IMR-90 (cell line): ENCODE measurements at regions of chr6 and their contacts with region 1.

Region 1: GRCh38 chr6:105484238-105485161 is 81.6 kb upstream of the PREP start:
- DNase-seq: peak; percentile 55
- ATAC-seq: peak; percentile 80
- H3K4me3 ChIP-seq: no peak overlapping the region
- H3K27ac ChIP-seq: no peak overlapping the region
- H3K4me1 ChIP-seq: peaks cover 15% of the 10 kb centered on the region
- H3K27me3 ChIP-seq: no peaks in the 10 kb centered on the region
- CTCF ChIP-seq: peak; percentile 95
- POLR2A ChIP-seq: peak; percentile 57; the same call in 1 of the 2 replicates
- RAD21 ChIP-seq: peak; percentile 97

Region 2: GRCh38 chr6:105087571-105088211 is 396.8 kb before region 1 on chr6:
- CTCF ChIA-PET with region 1: no interaction called
- POLR2A ChIA-PET with region 1: no interaction called
- dilution Hi-C with region 1: no loop called
- in situ Hi-C with region 1: no loop called
- intact Hi-C with region 1: loop called (anchors 5 kb)
- DNase-seq: peak; percentile 69
- ATAC-seq: peak; percentile 90
- H3K4me3 ChIP-seq: no peak overlapping the region
- H3K27ac ChIP-seq: no peak overlapping the region
- H3K4me1 ChIP-seq: no peaks in the 10 kb centered on the region
- H3K27me3 ChIP-seq: peaks cover 5% of the 10 kb centered on the region
- CTCF ChIP-seq: peak; percentile 91
- POLR2A ChIP-seq: no peak
- RAD21 ChIP-seq: peak; percentile 94

Region 3: GRCh38 chr6:105363100-105363754 is 121.3 kb before region 1 on chr6:
- CTCF ChIA-PET with region 1: no interaction called
- POLR2A ChIA-PET with region 1: no interaction called
- dilution Hi-C with region 1: no loop called
- in situ Hi-C with region 1: no loop called
- intact Hi-C with region 1: no loop called
- DNase-seq: peak; percentile 47
- ATAC-seq: peak; percentile 40
- H3K4me3 ChIP-seq: no peak overlapping the region
- H3K27ac ChIP-seq: no peak overlapping the region
- H3K4me1 ChIP-seq: peaks cover 6% of the 10 kb centered on the region
- H3K27me3 ChIP-seq: no peaks in the 10 kb centered on the region
- CTCF ChIP-seq: peak; percentile 66
- POLR2A ChIP-seq: no peak
- RAD21 ChIP-seq: peak; percentile 72

Region 4: GRCh38 chr6:105474234-105474633 is 10.3 kb before region 1 on chr6:
- CTCF ChIA-PET with region 1: interaction called, 10 read pairs
- POLR2A ChIA-PET with region 1: no interaction called
- dilution Hi-C with region 1: no loop called
- in situ Hi-C with region 1: no loop called
- intact Hi-C with region 1: no loop called
- DNase-seq: no peak
- ATAC-seq: no peak
- H3K4me3 ChIP-seq: no peak overlapping the region
- H3K27ac ChIP-seq: no peak overlapping the region
- H3K4me1 ChIP-seq: no peaks in the 10 kb centered on the region
- H3K27me3 ChIP-seq: peaks cover 8% of the 10 kb centered on the region
- CTCF ChIP-seq: no peak
- POLR2A ChIP-seq: no peak
- RAD21 ChIP-seq: no peak

Region 5: DNA sequence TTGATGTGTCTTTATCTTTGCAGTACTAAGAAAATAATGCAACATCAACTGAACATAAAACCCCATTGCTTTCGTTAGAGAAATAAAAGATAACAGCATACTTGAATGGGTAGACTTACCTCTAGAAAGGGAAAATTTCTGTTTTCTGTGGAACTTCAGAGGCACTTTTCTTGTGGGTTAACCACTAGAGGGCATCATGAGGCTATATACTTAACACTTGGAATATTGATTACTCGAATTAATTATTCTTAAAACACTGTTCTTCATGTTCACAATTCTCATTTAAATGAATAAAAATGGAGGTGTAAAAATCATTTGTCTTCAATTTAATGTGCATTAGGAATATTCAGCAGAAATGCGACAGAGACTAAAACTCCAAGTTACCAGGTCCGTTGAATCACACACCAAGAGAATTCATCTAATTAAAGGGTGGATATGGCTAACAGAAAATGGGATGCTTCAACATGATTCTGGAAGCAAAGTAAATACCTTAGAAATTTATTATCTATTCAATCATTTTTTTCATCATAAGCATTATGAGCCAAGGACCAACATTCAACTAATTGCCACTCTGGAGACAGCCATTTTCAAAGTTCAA is 249.2 kb after region 1 on chr6:
- CTCF ChIA-PET with region 1: no interaction called
- POLR2A ChIA-PET with region 1: no interaction called
- dilution Hi-C with region 1: no loop called
- in situ Hi-C with region 1: no loop called
- intact Hi-C with region 1: loop called (anchors 2 kb)
- DNase-seq: peak; percentile 60
- ATAC-seq: peak; percentile 44; the same call in 1 of the 2 replicates
- H3K4me3 ChIP-seq: no peak overlapping the region
- H3K27ac ChIP-seq: no peak overlapping the region
- H3K4me1 ChIP-seq: no peaks in the 10 kb centered on the region
- H3K27me3 ChIP-seq: no peaks in the 10 kb centered on the region
- CTCF ChIP-seq: peak; percentile 65
- POLR2A ChIP-seq: no peak
- RAD21 ChIP-seq: peak; percentile 73

Region 6: GRCh38 chr6:105992315-105992961 is 507.9 kb after region 1 on chr6:
- CTCF ChIA-PET with region 1: interaction called, 3 read pairs
- POLR2A ChIA-PET with region 1: no interaction called
- dilution Hi-C with region 1: no loop called
- in situ Hi-C with region 1: no loop called
- intact Hi-C with region 1: loop called (anchors 1 kb)
- DNase-seq: peak; percentile 72
- ATAC-seq: peak; percentile 79
- H3K4me3 ChIP-seq: peak overlapping the region; percentile 72
- H3K27ac ChIP-seq: peak overlapping the region; percentile 64; the same call in 1 of the 2 replicates
- H3K4me1 ChIP-seq: peaks cover 3% of the 10 kb centered on the region
- H3K27me3 ChIP-seq: no peaks in the 10 kb centered on the region
- CTCF ChIP-seq: no peak
- POLR2A ChIP-seq: no peak; the same call in 1 of the 2 replicates
- RAD21 ChIP-seq: no peak

Region 7: DNA sequence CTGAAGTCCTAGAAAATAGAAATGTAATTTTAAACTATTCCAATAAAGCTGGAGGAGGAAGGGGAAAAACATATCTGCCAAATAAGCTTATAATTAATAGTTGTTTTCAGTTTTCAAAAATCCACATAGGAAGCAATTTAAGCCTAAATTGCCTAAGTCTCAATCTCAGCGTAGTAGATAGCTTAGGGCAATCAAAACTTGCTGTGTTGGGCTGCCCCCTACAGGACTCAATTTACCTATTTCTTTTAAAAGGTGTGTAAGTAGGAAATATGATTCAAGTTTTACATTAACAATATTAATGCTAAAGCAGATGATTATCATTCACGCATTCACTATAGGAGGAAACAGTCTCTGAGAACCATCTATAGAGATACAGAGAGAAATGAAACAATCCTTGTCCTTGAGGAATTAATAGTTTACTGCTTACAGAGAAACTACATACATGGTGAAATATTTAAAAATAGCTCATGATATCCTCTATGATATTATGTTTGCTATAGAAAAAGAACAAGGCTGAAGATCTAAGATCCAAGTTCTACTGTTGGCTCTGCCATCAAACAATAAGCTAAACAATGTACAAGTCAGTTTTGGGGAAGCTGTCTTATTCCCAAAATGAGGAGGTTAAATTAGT is 738.9 kb after region 1 on chr6:
- CTCF ChIA-PET with region 1: interaction called, 7 read pairs
- POLR2A ChIA-PET with region 1: no interaction called
- dilution Hi-C with region 1: no loop called
- in situ Hi-C with region 1: loop called (anchors 10 kb)
- intact Hi-C with region 1: loop called (anchors 1 kb)
- DNase-seq: peak; percentile 79
- ATAC-seq: peak; percentile 68
- H3K4me3 ChIP-seq: no peak overlapping the region
- H3K27ac ChIP-seq: no peak overlapping the region
- H3K4me1 ChIP-seq: no peaks in the 10 kb centered on the region
- H3K27me3 ChIP-seq: no peaks in the 10 kb centered on the region
- CTCF ChIP-seq: peak; percentile 80
- POLR2A ChIP-seq: 0 out of 2 replicates have a peak, but pooled peaks have one; percentile 36
- RAD21 ChIP-seq: peak; percentile 93

Region 8: GRCh38 chr6:106444777-106445507 is 960.4 kb after region 1 on chr6:
- CTCF ChIA-PET with region 1: no interaction called
- POLR2A ChIA-PET with region 1: no interaction called
- dilution Hi-C with region 1: no loop called
- in situ Hi-C with region 1: no loop called
- intact Hi-C with region 1: loop called (anchors 10 kb)
- DNase-seq: peak; percentile 69
- ATAC-seq: peak; percentile 75; the same call in 1 of the 2 replicates
- H3K4me3 ChIP-seq: no peak overlapping the region
- H3K27ac ChIP-seq: no peak overlapping the region
- H3K4me1 ChIP-seq: no peaks in the 10 kb centered on the region
- H3K27me3 ChIP-seq: peaks cover 18% of the 10 kb centered on the region
- CTCF ChIP-seq: peak; percentile 73
- POLR2A ChIP-seq: no peak
- RAD21 ChIP-seq: peak; percentile 78